A549 (cell line): ENCODE measurements at regions of chr6 and their contacts with region 1.

Region 1: GRCh38 chr6:16739329-16739801 is 21.9 kb downstream of the ATXN1 start:
- DNase-seq: no peak
- ATAC-seq: no peak
- H3K4me3 ChIP-seq: no peak overlapping the region
- H3K27ac ChIP-seq: no peak overlapping the region
- H3K4me1 ChIP-seq: no peaks in the 10 kb centered on the region; the same call in 2 of the 3 replicates
- CTCF ChIP-seq: no peak
- EP300 ChIP-seq: no peak
- POLR2A ChIP-seq: no peak
- RAD21 ChIP-seq: 0 out of 5 replicates have a peak, but pooled peaks of 1 of the 2 experiments have one; percentile 4

Region 2: DNA sequence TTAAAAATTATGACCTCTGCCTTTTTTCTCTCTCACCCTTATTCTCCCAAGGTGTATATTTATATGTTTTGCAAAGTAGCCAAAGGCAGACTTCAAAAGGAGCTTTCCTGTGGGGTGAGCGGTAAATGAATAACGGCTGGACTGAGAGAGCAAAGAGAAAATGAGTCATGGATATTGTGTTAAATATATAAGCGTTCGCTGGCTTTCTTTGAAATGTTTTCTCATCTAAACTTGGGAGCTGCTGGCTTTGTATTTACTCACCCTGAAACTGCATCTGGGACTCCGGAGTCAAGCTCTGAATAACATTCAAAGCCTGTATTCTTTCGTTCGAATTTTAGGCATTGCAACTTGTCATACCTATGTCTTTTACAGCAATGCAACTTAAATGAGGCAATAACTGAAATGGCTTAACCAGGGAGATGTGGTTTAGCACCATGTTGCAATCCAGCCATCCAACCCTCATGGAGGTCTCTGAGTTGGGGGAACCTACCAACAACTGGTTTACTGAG is 10.1 kb before region 1 on chr6:
- CTCF ChIA-PET with region 1: interaction called, 10 read pairs
- POLR2A ChIA-PET with region 1: interaction called, 5 read pairs
- DNase-seq: peak; percentile 33 to 42
- ATAC-seq: peak; percentile 62; a peak in 5 of 6 replicates
- H3K4me3 ChIP-seq: 0 out of 3 replicates have a peak overlapping the region, but pooled peaks have one; percentile 18
- H3K27ac ChIP-seq: peak overlapping the region; percentile 65 to 83
- H3K4me1 ChIP-seq: peaks cover 75% of the 10 kb centered on the region
- CTCF ChIP-seq: no peak
- EP300 ChIP-seq: peak in 1 of 2 experiments; percentile 21; a peak in 1 of 5 replicates
- POLR2A ChIP-seq: no peak
- RAD21 ChIP-seq: peak in 1 of 2 experiments; percentile 28; a peak in 2 of 5 replicates